CD4-positive, alpha-beta memory T cell (primary cell): ENCODE measurements at regions of chr17 and their contacts with region 1.

Region 1: DNA sequence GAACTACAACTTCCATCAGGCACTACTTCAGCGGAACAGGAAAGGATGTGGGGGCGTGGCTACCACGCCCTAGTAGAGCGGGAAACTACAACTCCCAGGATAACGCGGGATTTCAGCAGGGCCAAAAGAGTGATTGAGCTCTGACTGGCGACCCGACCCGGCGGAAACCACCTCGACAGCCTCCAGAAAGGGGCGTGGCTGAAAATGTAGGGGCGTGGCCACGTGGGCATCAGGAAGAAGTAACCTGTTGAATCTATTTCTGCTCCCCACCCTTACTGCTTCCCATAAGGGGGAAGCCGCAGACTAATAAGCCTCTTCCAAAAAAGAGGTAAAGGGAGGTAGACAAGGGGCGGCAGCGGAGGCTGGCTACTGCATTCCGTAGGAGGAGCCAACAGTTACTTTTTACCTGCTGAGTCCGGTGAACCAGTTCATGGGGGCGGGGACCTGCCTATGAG is at the start of gene TMEM102:
- DNase-seq: peak; percentile 98 to 99 (median 99)
- H3K4me3 ChIP-seq: peak within 1 kb of the TSS; percentile 89
- H3K4me3 Mint-ChIP-seq: peak within 1 kb of the TSS; percentile 89 to 96 (median 94)
- H3K27ac ChIP-seq: peak within 1 kb of the TSS; percentile 86
- H3K27ac Mint-ChIP-seq: peak within 1 kb of the TSS; percentile 94 to 99 (median 97)
- H3K4me1 ChIP-seq: peaks cover 37% of the 10 kb centered on the region
- H3K4me1 Mint-ChIP-seq: peaks cover 22 to 47% (median 34%) of the 10 kb centered on the region in 4 donors
- H3K27me3 ChIP-seq: peaks cover 17% of the 10 kb centered on the region
- H3K27me3 Mint-ChIP-seq: peaks cover 9 to 10% of the 10 kb centered on the region in 2 donors
- total RNA-seq, gene TMEM102: 20.8 to 21.8 TPM

Region 2: DNA sequence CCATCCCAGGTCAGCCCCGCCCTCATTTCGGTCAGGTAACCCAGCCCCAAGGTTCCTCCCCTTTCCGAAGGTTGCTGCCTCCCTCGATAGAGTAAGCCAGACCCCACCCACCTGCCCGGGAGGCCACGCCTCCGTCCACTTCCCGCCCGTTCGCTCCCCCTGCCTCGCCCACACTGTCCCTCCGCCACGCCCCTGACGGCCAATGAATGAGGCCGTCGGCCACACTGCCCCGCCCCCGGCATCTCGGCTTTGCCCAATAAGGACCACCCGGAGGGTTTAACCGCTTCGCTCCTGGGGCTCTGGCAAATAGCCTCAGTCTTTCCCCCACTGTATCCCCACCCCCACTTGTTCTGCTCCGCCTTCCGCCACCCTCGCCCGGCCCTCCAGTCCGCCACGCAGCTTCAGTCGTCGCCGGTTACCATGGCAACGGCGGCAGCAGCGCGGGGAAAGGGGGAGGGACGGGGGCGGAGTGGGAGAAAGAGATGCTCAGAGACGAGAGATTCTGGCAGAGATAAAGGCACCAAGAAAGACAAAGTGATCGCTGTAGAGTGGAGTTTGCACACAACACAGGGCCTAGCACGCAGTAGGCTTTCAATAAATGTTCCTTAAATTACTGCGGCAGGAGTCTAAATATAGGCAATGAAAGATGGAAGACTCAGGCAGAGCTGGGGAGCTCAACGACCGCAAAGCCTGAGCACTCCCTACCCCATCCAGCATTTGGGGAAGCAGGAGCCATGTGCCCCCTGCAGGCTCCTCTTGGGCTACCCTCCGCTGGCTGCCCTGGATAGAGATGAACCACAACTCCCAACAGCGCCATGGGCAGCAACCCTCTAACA is 220.7 kb before region 1 on chr17:
- CTCF ChIA-PET with region 1: no interaction called
- POLR2A ChIA-PET with region 1: interaction called, 3 read pairs
- intact Hi-C with region 1: loop called (anchors 2 kb)
- DNase-seq: peak; percentile 97 to 99 (median 98)
- H3K4me3 ChIP-seq: peak overlapping the region; percentile 68 to 73
- H3K4me3 Mint-ChIP-seq: peak overlapping the region; percentile 90 to 98 (median 93)
- H3K27ac ChIP-seq: peak overlapping the region; percentile 96
- H3K27ac Mint-ChIP-seq: peak overlapping the region; percentile 98 to 100 (median 100)
- H3K4me1 ChIP-seq: peaks cover 54% of the 10 kb centered on the region
- H3K4me1 Mint-ChIP-seq: peaks cover 26 to 67% (median 43%) of the 10 kb centered on the region in 4 donors
- H3K27me3 ChIP-seq: no peaks in the 10 kb centered on the region
- H3K27me3 Mint-ChIP-seq: peaks cover 0 to 13% of the 10 kb centered on the region in 2 donors

Region 3: DNA sequence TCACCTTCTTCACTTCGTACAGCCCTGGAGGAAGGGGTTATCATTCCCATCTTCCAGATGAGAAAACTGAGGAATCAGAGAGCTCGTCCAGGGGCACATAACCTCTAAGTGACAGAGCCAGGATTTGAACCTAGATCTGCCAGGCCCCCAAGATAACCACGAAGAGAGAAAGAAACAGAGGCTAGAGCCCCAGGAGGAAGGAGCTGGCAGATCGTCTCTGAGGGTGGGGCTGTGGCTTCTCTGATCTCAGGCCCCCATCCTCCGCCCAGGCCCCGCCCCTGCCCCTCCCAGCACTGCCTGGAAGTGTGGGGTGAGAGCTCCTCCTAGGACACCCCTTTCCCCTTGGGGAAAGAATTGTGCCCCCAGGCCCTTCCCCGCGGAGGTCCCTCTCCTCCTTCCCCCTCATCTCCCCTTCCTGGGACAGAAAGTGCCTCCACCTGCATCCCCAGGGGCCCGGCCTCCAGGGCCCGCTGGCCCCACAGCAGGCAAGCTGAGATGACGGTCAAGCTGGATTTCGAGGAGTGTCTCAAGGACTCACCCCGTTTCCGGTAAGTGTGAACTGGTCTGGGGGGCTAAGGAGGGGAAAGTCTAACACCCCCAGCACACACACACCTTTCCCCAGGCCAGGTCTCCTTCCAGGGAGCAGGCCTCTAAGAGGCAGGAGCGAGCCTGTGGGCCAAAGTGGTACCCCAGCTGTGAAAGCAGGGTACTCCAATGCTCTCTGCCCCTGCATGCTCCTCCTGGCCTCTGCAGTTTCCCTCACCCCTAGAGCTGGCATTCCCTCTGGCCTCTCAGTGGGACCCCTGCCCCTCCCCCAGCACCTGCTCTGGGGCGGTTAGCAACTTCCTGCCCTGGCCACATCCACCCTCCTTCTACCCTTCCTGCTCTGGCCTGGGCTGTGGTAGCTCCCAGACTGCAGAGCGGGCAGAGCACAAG is 98.7 kb before region 1 on chr17 and contains the start of gene ACAP1:
- CTCF ChIA-PET with region 1: interaction called, 17 read pairs
- POLR2A ChIA-PET with region 1: interaction called, 28 read pairs
- intact Hi-C with region 1: no loop called
- DNase-seq: peak; percentile 78 to 90 (median 81)
- H3K4me3 ChIP-seq: peak within 1 kb of the TSS; percentile 94 to 98
- H3K4me3 Mint-ChIP-seq: peak within 1 kb of the TSS; percentile 88 to 99 (median 98)
- H3K27ac ChIP-seq: peak within 1 kb of the TSS; percentile 74
- H3K27ac Mint-ChIP-seq: peak within 1 kb of the TSS; percentile 89 to 99 (median 97)
- H3K4me1 ChIP-seq: peaks cover 81% of the 10 kb centered on the region
- H3K4me1 Mint-ChIP-seq: peaks cover 38 to 75% (median 56%) of the 10 kb centered on the region in 4 donors
- H3K27me3 ChIP-seq: no peaks in the 10 kb centered on the region
- H3K27me3 Mint-ChIP-seq: no peaks in the 10 kb centered on the region
- total RNA-seq, gene ACAP1: 507 to 516 TPM

Region 4: GRCh38 chr17:7394452-7395191 is 40.6 kb before region 1 on chr17 and contains the start of gene PLSCR3:
- CTCF ChIA-PET with region 1: interaction called, 8 read pairs
- POLR2A ChIA-PET with region 1: interaction called, 29 read pairs
- intact Hi-C with region 1: loop called (anchors 1 kb)
- DNase-seq: peak; percentile 76 to 88 (median 83)
- H3K4me3 ChIP-seq: peak within 1 kb of the TSS; percentile 78 to 94
- H3K4me3 Mint-ChIP-seq: peak within 1 kb of the TSS; percentile 93 to 97 (median 96)
- H3K27ac ChIP-seq: peak within 1 kb of the TSS; percentile 91
- H3K27ac Mint-ChIP-seq: peak within 1 kb of the TSS; percentile 92 to 98 (median 94)
- H3K4me1 ChIP-seq: peaks cover 44% of the 10 kb centered on the region
- H3K4me1 Mint-ChIP-seq: peaks cover 13 to 44% (median 31%) of the 10 kb centered on the region in 4 donors
- H3K27me3 ChIP-seq: no peaks in the 10 kb centered on the region
- H3K27me3 Mint-ChIP-seq: no peaks in the 10 kb centered on the region
- total RNA-seq, gene PLSCR3: 90.3 to 91.9 TPM

Region 5: GRCh38 chr17:7484067-7484918 is 49.0 kb after region 1 on chr17 and contains the start of gene POLR2A:
- CTCF ChIA-PET with region 1: interaction called, 52 read pairs
- POLR2A ChIA-PET with region 1: interaction called, 176 read pairs
- intact Hi-C with region 1: loop called (anchors 1 kb)
- DNase-seq: peak; percentile 97 to 99 (median 99)
- H3K4me3 ChIP-seq: peak within 1 kb of the TSS; percentile 92 to 95
- H3K4me3 Mint-ChIP-seq: peak within 1 kb of the TSS; percentile 96 to 100 (median 98)
- H3K27ac ChIP-seq: peak within 1 kb of the TSS; percentile 99
- H3K27ac Mint-ChIP-seq: peak within 1 kb of the TSS; percentile 99 to 100 (median 100)
- H3K4me1 ChIP-seq: peaks cover 59% of the 10 kb centered on the region
- H3K4me1 Mint-ChIP-seq: peaks cover 47 to 89% (median 65%) of the 10 kb centered on the region in 4 donors
- H3K27me3 ChIP-seq: no peaks in the 10 kb centered on the region
- H3K27me3 Mint-ChIP-seq: no peaks in the 10 kb centered on the region
- total RNA-seq, gene POLR2A: 178 to 191 TPM

Region 6: DNA sequence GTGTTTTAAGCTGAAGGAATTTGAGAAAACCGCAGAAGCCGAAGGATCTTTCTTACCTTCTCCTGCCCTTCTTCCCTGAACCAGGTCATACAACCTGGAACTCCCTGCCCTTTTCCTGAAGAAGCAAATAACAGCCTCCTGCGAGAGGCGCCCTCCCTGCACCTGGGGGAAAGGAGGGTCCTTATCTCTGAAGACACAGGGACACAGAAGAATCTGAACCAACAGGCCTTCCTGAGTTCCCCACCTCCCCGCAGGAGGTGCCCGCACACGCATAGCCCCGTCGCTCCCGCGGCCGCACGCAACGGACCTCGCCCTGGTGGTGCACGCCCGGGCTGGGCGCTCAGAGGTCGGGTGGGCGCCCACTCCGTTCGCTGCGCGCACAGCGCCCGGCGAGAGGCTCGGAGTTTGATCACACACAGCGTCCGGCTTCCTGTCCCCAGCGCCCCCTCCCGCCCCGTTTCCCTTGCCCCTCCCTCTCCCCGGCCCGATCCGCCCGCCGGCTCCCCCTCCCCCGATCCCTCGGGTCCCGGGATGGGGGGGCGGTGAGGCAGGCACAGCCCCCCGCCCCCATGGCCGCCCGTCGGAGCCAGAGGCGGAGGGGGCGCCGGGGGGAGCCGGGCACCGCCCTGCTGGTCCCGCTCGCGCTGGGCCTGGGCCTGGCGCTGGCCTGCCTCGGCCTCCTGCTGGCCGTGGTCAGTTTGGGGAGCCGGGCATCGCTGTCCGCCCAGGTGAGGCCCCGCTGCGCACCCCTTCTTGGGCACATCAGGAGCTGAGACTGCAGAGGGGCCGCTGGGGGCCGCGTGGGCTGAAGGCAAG is 113.5 kb after region 1 on chr17 and contains the start of gene TNFSF12:
- CTCF ChIA-PET with region 1: interaction called, 8 read pairs
- POLR2A ChIA-PET with region 1: interaction called, 15 read pairs
- intact Hi-C with region 1: loop called (anchors 1 kb)
- DNase-seq: peak; percentile 38 to 64 (median 42)
- H3K4me3 ChIP-seq: peak within 1 kb of the TSS; percentile 72 to 82
- H3K4me3 Mint-ChIP-seq: peak within 1 kb of the TSS; percentile 88 to 96 (median 92)
- H3K27ac ChIP-seq: peak within 1 kb of the TSS; percentile 79
- H3K27ac Mint-ChIP-seq: peak within 1 kb of the TSS; percentile 81 to 96 (median 94)
- H3K4me1 ChIP-seq: peaks cover 37% of the 10 kb centered on the region
- H3K4me1 Mint-ChIP-seq: peaks cover 30 to 52% (median 43%) of the 10 kb centered on the region in 4 donors
- H3K27me3 ChIP-seq: no peaks in the 10 kb centered on the region
- H3K27me3 Mint-ChIP-seq: no peaks in the 10 kb centered on the region
- total RNA-seq, gene TNFSF12: 45.1 to 52.2 TPM

Region 7: GRCh38 chr17:7589204-7589868 is 154.1 kb after region 1 on chr17:
- CTCF ChIA-PET with region 1: interaction called, 19 read pairs
- POLR2A ChIA-PET with region 1: interaction called, 11 read pairs
- intact Hi-C with region 1: no loop called
- DNase-seq: peak; percentile 57 to 65 (median 60)
- H3K4me3 ChIP-seq: no peak overlapping the region
- H3K4me3 Mint-ChIP-seq: no peak overlapping the region
- H3K27ac ChIP-seq: no peak overlapping the region
- H3K27ac Mint-ChIP-seq: no peak overlapping the region
- H3K4me1 ChIP-seq: peaks cover 24% of the 10 kb centered on the region
- H3K4me1 Mint-ChIP-seq: peaks cover 5 to 22% (median 11%) of the 10 kb centered on the region in 4 donors
- H3K27me3 ChIP-seq: no peaks in the 10 kb centered on the region
- H3K27me3 Mint-ChIP-seq: no peaks in the 10 kb centered on the region

Region 8: GRCh38 chr17:7867881-7868329 is 432.7 kb after region 1 on chr17:
- CTCF ChIA-PET with region 1: no interaction called
- POLR2A ChIA-PET with region 1: no interaction called
- intact Hi-C with region 1: no loop called
- DNase-seq: peak in 1 of 5 donors; percentile 36
- H3K4me3 ChIP-seq: peak overlapping the region in 1 of 2 donors; percentile 29
- H3K4me3 Mint-ChIP-seq: peak overlapping the region; percentile 50 to 84 (median 72)
- H3K27ac ChIP-seq: peak overlapping the region; percentile 39
- H3K27ac Mint-ChIP-seq: peak overlapping the region; percentile 59 to 90 (median 89)
- H3K4me1 ChIP-seq: peaks cover 30% of the 10 kb centered on the region
- H3K4me1 Mint-ChIP-seq: peaks cover 27 to 41% (median 34%) of the 10 kb centered on the region in 4 donors
- H3K27me3 ChIP-seq: no peaks in the 10 kb centered on the region
- H3K27me3 Mint-ChIP-seq: no peaks in the 10 kb centered on the region